ENCODE measurements at regions of chr11 and their contacts with region 1.

Region 1: DNA sequence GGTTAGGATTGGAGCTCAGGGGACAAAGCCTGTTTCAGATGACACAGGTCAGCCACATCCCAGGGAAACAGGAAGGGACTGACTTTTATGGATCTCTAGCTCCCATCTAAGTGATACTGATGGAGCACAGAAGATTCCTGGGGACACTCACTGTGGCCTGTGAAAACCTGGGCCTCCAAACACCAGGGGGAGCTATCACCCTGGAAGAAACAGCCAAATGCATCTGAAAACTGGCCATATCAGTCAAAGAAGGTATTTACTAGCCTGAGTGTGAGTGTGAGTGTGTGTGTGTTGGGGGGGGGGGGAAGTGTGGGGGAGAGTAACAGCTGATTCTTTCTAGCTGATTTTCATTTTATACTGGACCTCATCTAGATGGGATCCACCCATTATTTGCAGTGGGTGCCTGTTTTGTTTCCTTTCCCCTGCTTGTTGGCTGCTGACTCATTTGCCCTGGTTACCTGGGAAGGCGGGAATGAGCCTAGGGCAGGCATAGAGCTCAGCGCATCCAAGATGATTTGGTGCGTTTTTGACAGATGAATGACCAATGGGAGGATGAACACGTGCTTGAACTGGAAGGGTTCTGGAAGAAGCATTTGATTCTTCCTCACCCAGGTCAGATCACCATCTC is 284.0 kb downstream of the KIRREL3 start:
- DNase-seq: peak; percentile 64
- ATAC-seq: peak; percentile 38

Region 2: GRCh38 chr11:126683766-126684728 is 32.5 kb before region 1 on chr11:
- intact Hi-C with region 1: no loop called
- DNase-seq: no peak
- ATAC-seq: no peak

Region 3: GRCh38 chr11:126751242-126751641 is 34.7 kb after region 1 on chr11:
- intact Hi-C with region 1: no loop called
- DNase-seq: no peak
- ATAC-seq: no peak

Region 4: GRCh38 chr11:126989942-126990715 is 273.6 kb after region 1 on chr11:
- intact Hi-C with region 1: loop called (anchors 5 kb)
- DNase-seq: peak; percentile 86
- ATAC-seq: peak; percentile 84